BJ (cell line): ENCODE measurements at regions of chr2 and their contacts with region 1.

Region 1: DNA sequence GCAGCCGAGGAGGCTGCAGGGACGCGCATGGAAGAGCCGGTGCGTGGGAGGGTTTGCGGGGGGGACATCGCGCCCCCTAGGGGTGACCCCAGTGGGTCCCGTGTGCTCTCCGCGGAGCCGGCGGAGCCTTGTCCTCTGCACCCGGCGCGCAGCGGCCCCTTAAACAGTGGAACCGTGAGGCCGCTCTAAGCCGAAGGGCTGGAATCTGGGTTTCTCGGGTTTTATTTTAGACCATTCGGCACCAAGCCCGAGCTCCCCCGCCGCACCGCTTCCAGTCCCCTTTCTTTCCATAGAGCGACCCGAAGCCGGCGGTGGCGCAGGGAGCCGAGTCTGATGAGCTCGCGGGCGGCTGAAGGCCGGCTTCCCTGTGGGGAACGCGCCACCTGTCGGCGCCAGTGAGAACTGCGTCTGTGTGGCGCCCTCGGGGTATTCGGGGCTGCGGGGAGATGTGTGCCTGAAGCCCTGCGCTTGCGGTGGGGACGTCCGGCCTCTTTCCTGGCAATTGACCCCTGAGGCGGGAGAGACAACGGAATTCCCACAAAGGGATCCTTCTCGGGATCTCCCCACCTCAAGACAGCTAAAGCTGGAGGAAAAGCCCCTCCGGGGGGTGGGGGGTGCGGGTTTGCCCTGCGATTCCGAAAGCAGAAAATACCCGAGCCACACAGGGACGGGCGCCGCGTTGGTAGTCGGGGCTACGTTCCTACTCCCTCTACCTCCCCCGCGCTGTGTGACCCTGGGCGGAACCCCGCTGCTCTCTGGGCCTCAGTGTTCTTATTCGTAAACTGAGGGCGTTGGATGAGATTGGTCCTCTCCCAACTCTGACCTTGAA is 8.2 kb upstream of the EN1 start:
- DNase-seq: no peak
- H3K4me3 ChIP-seq: peak overlapping the region; percentile 20
- H3K27me3 ChIP-seq: peaks cover 84% of the 10 kb centered on the region
- CTCF ChIP-seq: peak; percentile 91

Region 2: GRCh38 chr2:118221666-118222594 is 633.7 kb before region 1 on chr2:
- CTCF ChIA-PET with region 1: interaction called, 35 read pairs
- POLR2A ChIA-PET with region 1: interaction called, 3 read pairs
- DNase-seq: peak; percentile 28
- H3K4me3 ChIP-seq: no peak overlapping the region
- H3K27me3 ChIP-seq: peaks cover 21% of the 10 kb centered on the region
- CTCF ChIP-seq: peak; percentile 73

Region 3: GRCh38 chr2:118371515-118371914 is 484.1 kb before region 1 on chr2:
- CTCF ChIA-PET with region 1: interaction called, 18 read pairs
- POLR2A ChIA-PET with region 1: no interaction called
- DNase-seq: no peak
- H3K4me3 ChIP-seq: no peak overlapping the region
- H3K27me3 ChIP-seq: no peaks in the 10 kb centered on the region
- CTCF ChIP-seq: peak; percentile 80

Region 4: GRCh38 chr2:118492335-118492734 is 363.3 kb before region 1 on chr2:
- CTCF ChIA-PET with region 1: interaction called, 13 read pairs
- POLR2A ChIA-PET with region 1: no interaction called
- DNase-seq: no peak
- H3K4me3 ChIP-seq: no peak overlapping the region
- H3K27me3 ChIP-seq: peaks cover 1% of the 10 kb centered on the region; the same call in 1 of the 2 replicates
- CTCF ChIP-seq: peak; percentile 45

Region 5: GRCh38 chr2:118539290-118539689 is 316.4 kb before region 1 on chr2:
- CTCF ChIA-PET with region 1: interaction called, 34 read pairs
- POLR2A ChIA-PET with region 1: no interaction called
- DNase-seq: no peak
- H3K4me3 ChIP-seq: no peak overlapping the region
- H3K27me3 ChIP-seq: no peaks in the 10 kb centered on the region
- CTCF ChIP-seq: peak; percentile 69